HepG2 (cell line): ENCODE measurements at regions of chr14 and their contacts with region 1.

Region 1: DNA sequence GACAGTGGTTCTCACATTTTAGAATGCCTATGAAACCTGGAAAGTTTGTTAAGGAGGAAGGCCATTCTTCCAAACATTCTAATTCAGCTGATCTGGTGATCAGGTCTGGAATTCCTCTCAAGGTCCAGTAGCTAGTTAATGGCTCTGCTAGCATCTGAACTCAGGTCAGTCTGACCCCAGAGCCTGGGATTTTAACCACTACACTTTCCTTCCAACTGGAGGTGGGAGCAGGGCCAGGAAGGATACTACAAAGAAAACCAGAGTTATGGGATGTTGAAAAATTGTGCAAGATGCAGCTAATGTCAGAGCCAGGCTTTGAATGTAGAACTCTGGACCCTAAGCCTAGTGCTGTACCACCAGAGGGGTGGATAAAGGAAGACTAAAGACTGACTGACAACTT is 73.6 kb upstream of the NID2 start:
- DNase-seq: no peak
- ATAC-seq: no peak; the same call in 2 of the 3 replicates
- H3K4me3 ChIP-seq: no peak overlapping the region
- H3K27ac ChIP-seq: no peak overlapping the region
- H3K4me1 ChIP-seq: no peaks in the 10 kb centered on the region
- H3K27me3 ChIP-seq: no peaks in the 10 kb centered on the region; a peak in 1 of 5 replicates
- CTCF ChIP-seq: no peak
- EP300 ChIP-seq: no peak
- POLR2A ChIP-seq: no peak
- RAD21 ChIP-seq: no peak

Region 2: DNA sequence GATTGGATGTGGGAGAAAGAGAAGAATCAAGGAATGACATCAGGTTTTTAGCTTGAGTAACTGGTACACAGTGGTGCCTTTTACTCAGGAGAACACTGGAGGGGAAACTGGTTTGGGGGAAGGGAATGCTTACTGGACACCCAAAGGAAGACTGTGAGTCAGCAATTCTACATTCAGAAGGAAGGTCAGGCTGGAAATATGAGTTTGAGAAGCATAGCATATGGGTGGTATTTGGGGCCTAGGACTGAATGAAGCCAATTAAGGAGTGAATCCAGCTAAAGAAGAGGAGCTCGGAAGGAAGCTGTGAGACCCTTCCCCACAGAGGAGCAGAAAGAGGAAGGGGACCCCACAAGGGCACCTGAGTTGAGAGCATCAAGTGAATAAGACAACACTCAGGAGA is 1795.0 kb before region 1 on chr14:
- CTCF ChIA-PET with region 1: no interaction called
- POLR2A ChIA-PET with region 1: no interaction called
- in situ Hi-C with region 1: no loop called
- intact Hi-C with region 1: no loop called
- DNase-seq: no peak
- ATAC-seq: no peak
- H3K4me3 ChIP-seq: no peak overlapping the region
- H3K27ac ChIP-seq: no peak overlapping the region
- H3K4me1 ChIP-seq: peaks cover 20% of the 10 kb centered on the region
- H3K27me3 ChIP-seq: no peaks in the 10 kb centered on the region
- CTCF ChIP-seq: no peak
- EP300 ChIP-seq: no peak
- POLR2A ChIP-seq: no peak
- RAD21 ChIP-seq: no peak

Region 3: GRCh38 chr14:52002542-52002941 is 140.0 kb before region 1 on chr14:
- CTCF ChIA-PET with region 1: no interaction called
- POLR2A ChIA-PET with region 1: no interaction called
- in situ Hi-C with region 1: no loop called
- intact Hi-C with region 1: loop called (anchors 1 kb)
- DNase-seq: no peak
- ATAC-seq: no peak
- H3K4me3 ChIP-seq: no peak overlapping the region
- H3K27ac ChIP-seq: no peak overlapping the region
- H3K4me1 ChIP-seq: 0 out of 2 replicates have a peak, but pooled peaks cover 6% of the 10 kb centered on the region
- H3K27me3 ChIP-seq: no peaks in the 10 kb centered on the region
- CTCF ChIP-seq: no peak
- EP300 ChIP-seq: no peak
- POLR2A ChIP-seq: no peak
- RAD21 ChIP-seq: no peak